ENCODE measurements at regions of chr11 and their contacts with region 1.

Region 1: DNA sequence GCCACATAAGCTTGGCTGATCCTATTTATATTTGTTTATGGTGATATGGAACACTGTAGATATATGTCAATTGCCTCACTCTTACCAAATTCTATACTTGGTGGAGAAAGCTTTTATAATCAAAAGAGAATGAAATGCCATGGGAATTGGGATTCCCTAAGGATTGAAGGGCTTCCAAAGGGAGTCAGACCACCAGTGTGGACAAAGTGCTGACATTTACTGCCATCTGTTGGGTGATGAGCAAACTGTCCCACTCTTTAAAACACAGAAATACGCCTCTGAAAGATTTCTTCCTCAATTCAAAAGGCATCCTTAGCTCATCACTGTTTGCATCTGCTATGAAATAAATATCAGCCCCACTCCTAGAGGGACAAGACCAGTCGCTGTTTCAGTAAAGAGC is 7.1 kb downstream of the SLC1A2 start:
- DNase-seq: no peak
- H3K4me3 Mint-ChIP-seq: no peak overlapping the region
- H3K27ac Mint-ChIP-seq: no peak overlapping the region
- H3K4me1 Mint-ChIP-seq: no peaks in the 10 kb centered on the region
- H3K27me3 Mint-ChIP-seq: peaks cover 40% of the 10 kb centered on the region
- CTCF ChIP-seq: peak; percentile 53

Region 2: GRCh38 chr11:34890812-34891211 is 521.5 kb before region 1 on chr11:
- CTCF ChIA-PET with region 1: no interaction called
- intact Hi-C with region 1: no loop called
- DNase-seq: no peak
- H3K4me3 Mint-ChIP-seq: no peak overlapping the region
- H3K27ac Mint-ChIP-seq: no peak overlapping the region
- H3K4me1 Mint-ChIP-seq: peaks cover 20% of the 10 kb centered on the region
- H3K27me3 Mint-ChIP-seq: no peaks in the 10 kb centered on the region
- CTCF ChIP-seq: no peak

Region 3: GRCh38 chr11:34997952-34998528 is 414.2 kb before region 1 on chr11:
- CTCF ChIA-PET with region 1: no interaction called
- intact Hi-C with region 1: loop called (anchors 5 kb)
- DNase-seq: no peak
- H3K4me3 Mint-ChIP-seq: peak overlapping the region; percentile 57
- H3K27ac Mint-ChIP-seq: peak overlapping the region; percentile 82
- H3K4me1 Mint-ChIP-seq: peaks cover 23% of the 10 kb centered on the region
- H3K27me3 Mint-ChIP-seq: no peaks in the 10 kb centered on the region
- CTCF ChIP-seq: no peak

Region 4: GRCh38 chr11:35391922-35392813 is 20.1 kb before region 1 on chr11:
- CTCF ChIA-PET with region 1: no interaction called
- intact Hi-C with region 1: no loop called
- DNase-seq: peak; percentile 92
- H3K4me3 Mint-ChIP-seq: no peak overlapping the region
- H3K27ac Mint-ChIP-seq: no peak overlapping the region
- H3K4me1 Mint-ChIP-seq: peaks cover 43% of the 10 kb centered on the region
- H3K27me3 Mint-ChIP-seq: no peaks in the 10 kb centered on the region
- CTCF ChIP-seq: peak; percentile 87